Left colon (tissue), 2 donors: ENCODE measurements at regions of chr1 and their contacts with region 1.

Region 1: DNA sequence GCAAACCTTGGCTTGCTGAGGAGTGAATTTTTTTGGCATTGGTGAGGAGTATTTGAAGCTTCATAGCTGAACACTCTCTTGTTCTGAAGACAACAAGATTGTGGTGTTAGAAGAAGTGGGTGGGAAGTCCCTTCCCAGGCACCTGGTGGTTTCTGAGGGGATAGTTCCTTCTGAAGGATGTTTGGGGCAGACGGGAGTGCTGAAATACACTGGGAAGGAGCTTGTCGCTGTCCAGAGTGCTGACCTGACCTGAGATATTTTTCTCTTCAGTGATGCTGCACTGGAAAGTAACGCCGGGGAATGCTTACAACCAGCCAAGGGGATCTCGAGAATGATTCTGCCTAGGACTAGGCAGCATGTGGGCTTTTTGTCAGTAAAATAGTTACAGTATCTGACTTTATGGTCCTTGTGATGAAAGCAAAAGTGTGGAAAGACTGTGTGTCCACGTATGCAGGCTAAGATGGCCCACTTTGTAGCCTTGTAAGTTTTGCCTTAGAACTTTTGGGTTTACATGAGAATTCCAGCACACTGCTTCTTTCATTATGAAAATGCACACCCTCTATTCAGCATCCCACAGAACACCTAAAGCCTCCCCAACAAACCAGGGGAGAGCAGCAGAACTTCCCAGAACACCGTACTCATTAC is 33.1 kb upstream of the NFASC start:
- DNase-seq: peak in 1 of 2 donors; percentile 63
- ATAC-seq: peak; percentile 52

Region 2: DNA sequence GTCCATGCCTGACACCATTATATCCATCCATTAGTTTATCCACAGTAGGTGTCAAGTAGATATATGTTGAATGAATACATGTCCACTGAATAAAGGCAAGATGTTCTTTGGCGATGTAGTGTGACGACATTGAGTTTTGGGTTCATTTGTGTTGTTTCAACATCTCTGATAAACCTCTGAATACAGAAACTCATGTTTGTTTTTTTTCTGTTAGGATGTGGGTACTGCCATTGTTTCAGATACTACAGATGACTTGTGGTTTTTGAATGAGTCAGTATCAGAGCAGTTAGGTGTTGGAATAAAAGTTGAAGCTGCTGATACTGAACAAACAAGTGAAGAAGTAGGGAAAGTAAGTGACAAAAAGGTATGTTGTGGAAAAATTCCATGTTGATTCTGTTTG is 293.2 kb before region 1 on chr1:
- intact Hi-C with region 1: no loop called
- DNase-seq: no peak
- ATAC-seq: no peak

Region 3: DNA sequence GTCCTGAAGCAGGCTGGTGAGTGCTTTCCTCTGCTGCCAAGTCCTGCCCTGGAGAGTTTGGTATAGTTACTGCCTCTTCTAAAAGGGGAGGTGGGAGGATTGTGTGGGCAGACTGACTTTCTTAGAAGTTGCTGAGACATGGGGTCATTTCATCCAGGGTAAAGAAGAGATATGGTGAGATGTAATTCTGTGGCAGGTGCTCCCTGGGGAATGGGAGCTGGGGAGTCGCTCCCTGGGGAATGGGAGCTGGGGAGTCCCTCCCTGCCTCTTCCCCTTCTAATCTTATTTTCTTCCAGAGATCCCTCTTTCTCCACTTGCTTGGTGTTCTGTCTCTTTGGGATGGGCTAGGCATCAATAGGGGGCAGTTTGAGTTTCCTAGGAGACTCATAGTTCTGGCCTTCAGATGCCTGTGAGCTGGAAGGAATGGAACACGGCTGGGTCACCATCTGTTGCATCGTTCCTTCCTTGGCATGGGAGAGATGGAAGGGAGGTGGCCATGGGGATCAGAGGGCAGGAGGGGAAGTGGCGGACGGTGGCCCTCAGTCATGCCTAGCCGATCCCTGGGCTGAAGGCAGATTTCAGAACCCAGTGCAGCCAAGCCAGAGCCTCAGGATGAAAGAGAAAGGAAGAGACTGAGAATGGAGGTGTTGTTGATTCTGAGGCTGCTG is 92.1 kb after region 1 on chr1:
- intact Hi-C with region 1: loop called in 1 of 2 experiments (anchors 10 kb)
- DNase-seq: no peak
- ATAC-seq: no peak

Region 4: DNA sequence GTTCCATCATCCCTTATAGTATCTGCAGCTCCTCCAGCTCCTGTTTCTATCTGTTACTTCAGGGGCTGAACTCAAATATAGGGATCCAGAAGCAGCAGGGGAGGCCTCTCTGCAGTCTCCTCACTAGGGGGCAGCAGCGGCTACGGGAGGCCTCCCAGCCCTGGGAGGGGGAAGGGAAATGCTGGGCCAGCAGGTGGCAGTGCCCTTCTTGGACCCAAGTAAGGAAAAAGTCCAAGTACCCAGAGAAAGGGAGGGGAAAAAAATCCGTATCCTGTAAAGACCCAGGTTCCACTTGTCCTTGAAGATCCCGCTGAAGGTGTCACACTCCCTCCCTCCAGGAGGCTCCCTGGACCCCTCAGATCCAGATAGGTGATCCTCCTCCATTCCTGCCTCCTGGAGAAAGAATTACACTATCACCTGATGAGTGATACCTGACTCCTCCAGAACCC is 498.1 kb after region 1 on chr1:
- intact Hi-C with region 1: no loop called
- DNase-seq: peak; percentile 80 to 90
- ATAC-seq: peak; percentile 97